Calu3 (cell line): ENCODE measurements at regions of chr4 and their contacts with region 1.

Region 1: DNA sequence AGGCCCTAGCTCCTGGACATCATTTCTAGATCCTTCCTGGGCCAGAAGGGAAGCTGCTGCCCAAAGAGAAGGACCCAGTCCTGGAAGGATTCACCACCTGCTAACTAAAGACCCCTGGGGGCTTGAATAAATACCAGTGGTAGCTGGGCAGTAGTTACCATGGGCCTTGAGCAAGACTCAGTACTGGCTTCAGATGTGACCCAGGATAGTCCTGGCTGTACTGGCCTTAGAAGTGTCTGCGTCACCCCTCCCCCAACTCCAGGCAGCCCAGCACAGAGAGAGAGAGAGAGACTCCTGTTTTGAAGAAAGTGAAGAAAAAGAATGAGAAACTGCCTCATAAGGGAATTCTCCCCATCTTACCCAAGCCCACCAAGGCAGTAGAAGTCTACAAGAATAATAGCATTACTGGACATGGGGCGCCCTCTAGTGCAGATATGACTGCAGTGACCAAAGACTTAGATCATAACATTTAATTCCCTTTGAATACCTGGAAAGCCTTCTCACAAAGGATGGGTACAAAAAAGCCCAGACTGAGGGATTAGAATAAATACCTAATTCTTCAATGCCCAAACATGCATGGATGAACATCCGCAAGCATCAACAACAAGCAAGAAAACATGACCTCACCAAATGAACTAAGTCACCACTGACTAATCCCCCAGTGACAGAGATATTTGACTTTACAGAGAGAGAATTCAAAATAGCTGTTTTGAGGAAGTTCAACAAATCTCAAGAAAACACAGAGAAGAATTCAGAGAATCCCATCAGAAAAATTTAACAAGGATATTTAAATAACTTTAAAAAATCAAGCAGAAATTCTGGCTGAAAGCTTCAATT is 171.8 kb downstream of the HNRNPD start:
- DNase-seq: peak; percentile 62
- H3K4me3 Mint-ChIP-seq: no peak overlapping the region
- H3K27ac Mint-ChIP-seq: no peak overlapping the region
- H3K4me1 Mint-ChIP-seq: peaks cover 42% of the 10 kb centered on the region
- H3K27me3 Mint-ChIP-seq: no peaks in the 10 kb centered on the region
- CTCF ChIP-seq: peak; percentile 65

Region 2: DNA sequence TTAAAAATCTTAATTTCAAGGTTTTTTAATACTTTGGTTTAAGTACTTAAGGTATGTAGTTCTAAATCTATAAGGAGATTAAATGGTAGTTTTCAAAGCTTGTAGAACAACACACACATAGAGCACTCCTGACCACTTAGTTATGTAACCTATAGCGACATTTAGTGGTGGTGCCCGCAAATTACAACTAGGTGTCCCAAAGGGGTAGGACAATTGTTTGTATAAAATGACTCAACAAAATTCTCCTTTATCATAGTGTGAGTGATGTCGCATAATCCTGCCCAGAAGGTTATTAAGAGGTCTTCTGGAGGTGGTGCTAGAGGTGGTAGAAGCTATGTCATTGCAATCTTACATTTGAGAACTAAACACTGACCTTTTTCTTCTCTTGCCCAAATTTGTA is 357.3 kb before region 1 on chr4:
- CTCF ChIA-PET with region 1: no interaction called
- intact Hi-C with region 1: loop called (anchors 5 kb)
- DNase-seq: peak; percentile 71
- H3K4me3 Mint-ChIP-seq: no peak overlapping the region
- H3K27ac Mint-ChIP-seq: peak overlapping the region; percentile 66
- H3K4me1 Mint-ChIP-seq: peaks cover 55% of the 10 kb centered on the region
- H3K27me3 Mint-ChIP-seq: no peaks in the 10 kb centered on the region
- CTCF ChIP-seq: peak; percentile 52

Region 3: DNA sequence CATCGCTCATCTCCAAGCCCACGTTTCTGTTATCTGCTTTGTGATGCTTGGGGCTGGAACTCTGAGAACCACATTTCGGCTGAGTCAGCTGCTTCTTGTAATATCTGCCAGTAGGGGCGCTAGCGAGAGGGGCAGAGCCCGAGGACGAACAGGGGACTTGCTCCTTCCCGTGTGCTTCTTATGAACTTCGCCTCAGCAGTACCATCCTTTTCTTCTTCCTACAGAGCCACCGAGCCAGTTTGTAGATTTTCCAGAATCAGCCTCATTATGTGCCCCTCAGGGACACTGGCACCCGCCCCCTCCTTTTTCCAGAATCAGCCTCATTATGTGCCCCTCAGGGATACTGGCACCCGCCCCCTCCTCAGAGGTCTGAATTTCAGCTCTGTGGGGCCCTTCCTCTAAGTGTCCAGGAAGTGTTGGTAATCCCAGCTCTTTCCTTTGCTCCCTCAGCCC is 288.6 kb before region 1 on chr4:
- CTCF ChIA-PET with region 1: no interaction called
- intact Hi-C with region 1: loop called (anchors 10 kb)
- DNase-seq: peak; percentile 45
- H3K4me3 Mint-ChIP-seq: no peak overlapping the region
- H3K27ac Mint-ChIP-seq: no peak overlapping the region
- H3K4me1 Mint-ChIP-seq: peaks cover 20% of the 10 kb centered on the region
- H3K27me3 Mint-ChIP-seq: no peaks in the 10 kb centered on the region
- CTCF ChIP-seq: peak; percentile 43